HCT116 (cell line): ENCODE measurements at regions of chr2 and their contacts with region 1.

Region 1: GRCh38 chr2:154794406-154794805 is 95.9 kb downstream of the KCNJ3 start:
- DNase-seq: no peak
- ATAC-seq: no peak
- H3K4me3 ChIP-seq: no peak overlapping the region
- H3K27ac ChIP-seq: no peak overlapping the region
- H3K4me1 ChIP-seq: no peaks in the 10 kb centered on the region
- H3K27me3 ChIP-seq: no peaks in the 10 kb centered on the region
- CTCF ChIP-seq: no peak
- POLR2A ChIP-seq: no peak
- RAD21 ChIP-seq: no peak

Region 2: GRCh38 chr2:154832711-154833110 is 38.3 kb after region 1 on chr2:
- CTCF ChIA-PET with region 1: no interaction called
- POLR2A ChIA-PET with region 1: no interaction called
- RAD21 ChIA-PET with region 1: no interaction called
- intact Hi-C with region 1: loop called (anchors 5 kb)
- DNase-seq: no peak
- ATAC-seq: no peak
- H3K4me3 ChIP-seq: no peak overlapping the region
- H3K27ac ChIP-seq: no peak overlapping the region
- H3K4me1 ChIP-seq: no peaks in the 10 kb centered on the region
- H3K27me3 ChIP-seq: no peaks in the 10 kb centered on the region
- CTCF ChIP-seq: no peak
- POLR2A ChIP-seq: no peak
- RAD21 ChIP-seq: no peak